ENCODE measurements at regions of chr9 and their contacts with region 1.

Region 1: GRCh38 chr9:109119439-109120203 is at the start of gene TMEM245:
- DNase-seq: peak; percentile 99
- H3K4me3 Mint-ChIP-seq: peak within 1 kb of the TSS; percentile 86
- H3K27ac Mint-ChIP-seq: peak within 1 kb of the TSS; percentile 73
- H3K4me1 Mint-ChIP-seq: peaks cover 22% of the 10 kb centered on the region
- H3K27me3 Mint-ChIP-seq: no peaks in the 10 kb centered on the region
- CTCF ChIP-seq: no peak
- total RNA-seq, gene TMEM245: 35.0 and 43.8 TPM in 2 replicates

Region 2: GRCh38 chr9:108150736-108151586 is 968.7 kb before region 1 on chr9:
- CTCF ChIA-PET with region 1: no interaction called
- POLR2A ChIA-PET with region 1: no interaction called
- intact Hi-C with region 1: no loop called
- DNase-seq: peak; percentile 81
- H3K4me3 Mint-ChIP-seq: no peak overlapping the region
- H3K27ac Mint-ChIP-seq: no peak overlapping the region
- H3K4me1 Mint-ChIP-seq: peaks cover 11% of the 10 kb centered on the region
- H3K27me3 Mint-ChIP-seq: no peaks in the 10 kb centered on the region
- CTCF ChIP-seq: no peak

Region 3: DNA sequence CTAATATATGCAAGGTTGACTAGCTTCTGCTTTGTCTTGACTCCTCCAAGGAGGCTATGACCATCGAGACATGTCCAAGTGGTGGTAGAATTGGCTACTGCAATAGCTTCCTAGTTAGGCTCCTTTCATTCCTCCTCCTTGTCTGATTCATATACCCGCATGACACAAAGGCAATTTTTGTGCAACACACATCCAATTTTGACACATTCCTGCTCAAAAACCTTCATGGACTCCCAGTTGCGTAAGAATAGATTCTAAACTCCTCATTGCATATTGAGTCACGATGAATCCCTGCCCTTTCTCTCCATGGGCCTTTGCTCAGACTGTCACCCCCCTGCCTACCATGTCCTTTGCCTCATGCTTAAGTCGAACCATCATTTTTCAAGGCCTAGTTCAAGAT is 608.3 kb before region 1 on chr9:
- CTCF ChIA-PET with region 1: no interaction called
- POLR2A ChIA-PET with region 1: no interaction called
- intact Hi-C with region 1: no loop called
- DNase-seq: peak; percentile 86
- H3K4me3 Mint-ChIP-seq: no peak overlapping the region
- H3K27ac Mint-ChIP-seq: no peak overlapping the region
- H3K4me1 Mint-ChIP-seq: peaks cover 8% of the 10 kb centered on the region
- H3K27me3 Mint-ChIP-seq: no peaks in the 10 kb centered on the region
- CTCF ChIP-seq: no peak

Region 4: DNA sequence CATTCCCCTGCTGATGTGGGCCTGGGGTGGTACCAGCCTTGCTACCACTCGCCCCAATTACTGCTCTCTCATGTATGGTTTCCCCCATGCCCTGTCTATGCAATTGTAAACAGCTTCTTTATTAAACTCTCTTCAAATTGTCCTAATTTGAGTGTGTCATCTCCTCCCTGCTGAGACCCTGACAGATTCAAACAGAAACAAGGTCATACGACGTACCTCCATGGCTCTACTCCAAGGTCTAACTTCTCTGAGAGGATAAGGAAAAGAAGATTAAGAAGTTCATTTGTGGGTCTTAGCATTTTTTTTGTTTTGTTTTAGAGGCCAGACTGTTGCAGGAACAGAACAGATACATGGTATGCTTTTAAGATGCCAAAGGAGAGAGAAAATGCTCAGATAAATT is 147.4 kb before region 1 on chr9:
- CTCF ChIA-PET with region 1: no interaction called
- POLR2A ChIA-PET with region 1: no interaction called
- intact Hi-C with region 1: no loop called
- DNase-seq: no peak
- H3K4me3 Mint-ChIP-seq: no peak overlapping the region
- H3K27ac Mint-ChIP-seq: no peak overlapping the region
- H3K4me1 Mint-ChIP-seq: no peaks in the 10 kb centered on the region
- H3K27me3 Mint-ChIP-seq: no peaks in the 10 kb centered on the region
- CTCF ChIP-seq: no peak

Region 5: DNA sequence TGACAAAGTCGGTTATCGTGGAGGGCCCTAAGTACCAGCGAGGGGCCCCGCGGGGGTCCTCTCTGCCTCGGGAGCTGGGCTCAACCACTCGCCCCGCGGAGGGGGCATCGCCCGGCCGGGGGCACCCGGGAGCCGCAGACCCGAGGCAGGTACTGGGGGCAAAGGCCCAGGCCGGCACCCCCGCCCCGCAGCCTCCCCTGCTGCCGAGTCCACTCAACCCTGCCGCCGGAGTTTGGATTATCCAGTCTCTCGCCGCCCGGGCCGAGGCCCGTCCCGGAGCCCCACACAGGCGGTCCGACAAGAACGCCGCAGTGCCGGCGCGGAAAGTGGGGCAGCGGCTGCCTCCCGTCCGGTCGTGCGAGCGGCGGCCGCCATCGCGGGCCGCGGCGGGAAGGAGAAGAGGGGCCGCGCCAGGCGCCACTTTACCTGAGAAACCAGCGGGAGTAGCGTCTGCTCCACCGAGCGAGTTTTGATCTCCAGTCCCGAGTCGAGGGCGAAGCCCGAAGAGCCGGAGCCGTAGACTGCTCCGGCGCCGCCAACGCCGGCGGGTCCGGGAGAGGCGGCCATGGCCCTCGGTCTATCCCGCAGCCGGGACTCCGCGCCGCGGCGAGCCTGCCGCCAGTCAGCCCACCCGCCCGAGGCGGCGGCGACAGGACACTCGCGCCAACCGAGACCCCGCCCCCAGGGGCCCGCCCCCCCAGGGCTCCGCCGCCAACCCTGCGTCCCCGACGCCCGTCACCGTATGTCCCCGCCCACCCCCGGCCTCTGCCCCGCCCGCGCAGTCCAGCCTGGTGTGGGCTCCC is 106.5 kb before region 1 on chr9 and contains the start of gene CTNNAL1:
- CTCF ChIA-PET with region 1: no interaction called
- POLR2A ChIA-PET with region 1: interaction called, 26 read pairs
- intact Hi-C with region 1: loop called (anchors 2 kb)
- DNase-seq: peak; percentile 82
- H3K4me3 Mint-ChIP-seq: peak within 1 kb of the TSS; percentile 84
- H3K27ac Mint-ChIP-seq: peak within 1 kb of the TSS; percentile 87
- H3K4me1 Mint-ChIP-seq: peaks cover 24% of the 10 kb centered on the region
- H3K27me3 Mint-ChIP-seq: no peaks in the 10 kb centered on the region
- CTCF ChIP-seq: no peak
- total RNA-seq, gene CTNNAL1: 48.6 and 85.6 TPM in 2 replicates

Region 6: GRCh38 chr9:109098171-109098959 is 21.3 kb before region 1 on chr9:
- CTCF ChIA-PET with region 1: no interaction called
- POLR2A ChIA-PET with region 1: interaction called, 57 read pairs
- intact Hi-C with region 1: loop called (anchors 2 kb)
- DNase-seq: peak; percentile 84
- H3K4me3 Mint-ChIP-seq: peak overlapping the region; percentile 7
- H3K27ac Mint-ChIP-seq: peak overlapping the region; percentile 84
- H3K4me1 Mint-ChIP-seq: peaks cover 50% of the 10 kb centered on the region
- H3K27me3 Mint-ChIP-seq: no peaks in the 10 kb centered on the region
- CTCF ChIP-seq: no peak

Region 7: DNA sequence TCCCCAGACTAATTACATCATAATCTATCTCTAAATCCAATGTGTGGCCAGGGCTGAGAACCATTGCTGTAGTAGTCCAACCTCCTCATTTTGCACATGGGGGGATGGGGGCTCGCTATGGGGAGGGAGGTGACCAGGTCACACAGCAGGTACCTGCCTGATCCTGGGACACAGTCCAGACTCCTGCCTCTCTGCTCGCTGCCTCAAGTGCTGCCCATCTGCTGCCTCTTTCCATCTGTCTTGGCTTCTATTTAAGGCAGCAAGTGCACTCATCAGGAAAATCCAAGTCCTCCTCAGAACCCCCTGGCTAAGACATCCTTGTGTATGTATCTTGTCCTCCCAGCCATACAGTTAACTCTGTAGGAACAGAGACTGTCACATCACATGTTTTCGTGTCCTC is 105.1 kb after region 1 on chr9:
- CTCF ChIA-PET with region 1: no interaction called
- POLR2A ChIA-PET with region 1: interaction called, 10 read pairs
- intact Hi-C with region 1: no loop called
- DNase-seq: no peak
- H3K4me3 Mint-ChIP-seq: no peak overlapping the region
- H3K27ac Mint-ChIP-seq: no peak overlapping the region
- H3K4me1 Mint-ChIP-seq: no peaks in the 10 kb centered on the region
- H3K27me3 Mint-ChIP-seq: no peaks in the 10 kb centered on the region
- CTCF ChIP-seq: no peak

Region 8: GRCh38 chr9:109232449-109233237 is 113.0 kb after region 1 on chr9:
- CTCF ChIA-PET with region 1: no interaction called
- POLR2A ChIA-PET with region 1: interaction called, 5 read pairs
- intact Hi-C with region 1: loop called (anchors 10 kb)
- DNase-seq: peak; percentile 83
- H3K4me3 Mint-ChIP-seq: peak overlapping the region; percentile 18
- H3K27ac Mint-ChIP-seq: peak overlapping the region; percentile 71
- H3K4me1 Mint-ChIP-seq: peaks cover 19% of the 10 kb centered on the region
- H3K27me3 Mint-ChIP-seq: no peaks in the 10 kb centered on the region
- CTCF ChIP-seq: no peak

Region 9: GRCh38 chr9:109251080-109251775 is 131.6 kb after region 1 on chr9:
- CTCF ChIA-PET with region 1: interaction called, 3 read pairs
- POLR2A ChIA-PET with region 1: interaction called, 25 read pairs
- intact Hi-C with region 1: no loop called
- DNase-seq: peak; percentile 84
- H3K4me3 Mint-ChIP-seq: peak overlapping the region; percentile 59
- H3K27ac Mint-ChIP-seq: peak overlapping the region; percentile 96
- H3K4me1 Mint-ChIP-seq: peaks cover 50% of the 10 kb centered on the region
- H3K27me3 Mint-ChIP-seq: no peaks in the 10 kb centered on the region
- CTCF ChIP-seq: no peak

Measured in MCF 10A (cell line).